IMR-90 (cell line): ENCODE measurements at regions of chr9 and their contacts with region 1.

Region 1: GRCh38 chr9:19408693-19409400 is at the start of gene ACER2:
- DNase-seq: peak; percentile 84
- ATAC-seq: peak; percentile 98
- H3K4me3 ChIP-seq: peak within 1 kb of the TSS; percentile 84
- H3K27ac ChIP-seq: peak within 1 kb of the TSS; percentile 44; the same call in 1 of the 2 replicates
- H3K4me1 ChIP-seq: no peaks in the 10 kb centered on the region
- H3K27me3 ChIP-seq: no peaks in the 10 kb centered on the region
- CTCF ChIP-seq: peak; percentile 19
- POLR2A ChIP-seq: peak; percentile 75
- RAD21 ChIP-seq: no peak
- total RNA-seq, gene ACER2: 1.6 and 1.9 TPM in 2 replicates

Region 2: DNA sequence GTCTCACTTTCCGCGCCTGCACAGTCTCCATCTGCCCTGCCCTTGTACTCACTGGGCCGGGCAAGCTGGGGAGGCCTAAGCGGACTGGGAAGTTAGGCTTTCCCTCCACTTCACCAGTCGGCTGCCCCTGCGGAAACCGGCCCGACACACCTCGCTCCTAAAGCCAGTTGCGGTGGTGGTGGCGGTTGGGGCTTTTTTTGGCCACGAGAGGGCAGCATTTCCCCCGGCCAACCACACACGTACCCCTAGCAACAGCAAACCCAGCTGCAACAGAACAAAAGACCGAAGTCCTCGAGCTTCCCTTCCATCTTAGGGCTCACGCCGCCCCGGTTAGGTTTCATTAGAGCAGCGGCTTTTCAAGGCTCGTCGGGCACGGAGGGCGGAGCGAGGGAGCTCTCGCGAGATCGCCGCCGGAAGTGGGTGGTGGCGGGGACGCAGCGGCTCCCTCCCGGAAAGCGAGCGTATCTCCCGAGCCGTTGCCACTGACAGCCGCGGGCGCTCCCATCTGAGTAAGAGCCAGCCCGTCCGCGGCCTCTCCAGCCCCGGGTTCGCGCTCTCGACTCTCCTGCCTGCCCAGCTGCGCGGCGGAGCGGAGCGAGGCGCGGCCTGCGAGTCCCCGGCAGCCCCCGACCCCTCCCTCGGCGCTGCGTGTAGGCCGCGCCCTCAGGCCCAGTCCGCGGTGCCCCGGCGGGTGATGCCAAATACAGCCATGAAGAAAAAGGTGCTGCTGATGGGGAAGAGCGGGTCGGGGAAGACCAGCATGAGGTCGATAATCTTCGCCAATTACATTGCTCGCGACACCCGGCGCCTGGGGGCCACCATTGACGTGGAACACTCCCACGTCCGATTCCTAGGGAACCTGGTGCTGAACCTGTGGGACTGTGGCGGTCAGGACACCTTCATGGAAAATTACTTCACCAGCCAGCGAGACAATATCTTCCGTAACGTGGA is 359.6 kb before region 1 on chr9 and contains the start of gene RRAGA:
- CTCF ChIA-PET with region 1: no interaction called
- POLR2A ChIA-PET with region 1: no interaction called
- dilution Hi-C with region 1: no loop called
- in situ Hi-C with region 1: no loop called
- intact Hi-C with region 1: loop called (anchors 1 kb)
- DNase-seq: peak; percentile 96
- ATAC-seq: peak; percentile 93
- H3K4me3 ChIP-seq: peak within 1 kb of the TSS; percentile 74
- H3K27ac ChIP-seq: peak within 1 kb of the TSS; percentile 96
- H3K4me1 ChIP-seq: peaks cover 2% of the 10 kb centered on the region; the same call in 1 of the 2 replicates
- H3K27me3 ChIP-seq: no peaks in the 10 kb centered on the region
- CTCF ChIP-seq: peak; percentile 89
- POLR2A ChIP-seq: peak; percentile 97
- RAD21 ChIP-seq: peak; percentile 62
- total RNA-seq, gene RRAGA: 63.3 and 74.7 TPM in 2 replicates

Region 3: DNA sequence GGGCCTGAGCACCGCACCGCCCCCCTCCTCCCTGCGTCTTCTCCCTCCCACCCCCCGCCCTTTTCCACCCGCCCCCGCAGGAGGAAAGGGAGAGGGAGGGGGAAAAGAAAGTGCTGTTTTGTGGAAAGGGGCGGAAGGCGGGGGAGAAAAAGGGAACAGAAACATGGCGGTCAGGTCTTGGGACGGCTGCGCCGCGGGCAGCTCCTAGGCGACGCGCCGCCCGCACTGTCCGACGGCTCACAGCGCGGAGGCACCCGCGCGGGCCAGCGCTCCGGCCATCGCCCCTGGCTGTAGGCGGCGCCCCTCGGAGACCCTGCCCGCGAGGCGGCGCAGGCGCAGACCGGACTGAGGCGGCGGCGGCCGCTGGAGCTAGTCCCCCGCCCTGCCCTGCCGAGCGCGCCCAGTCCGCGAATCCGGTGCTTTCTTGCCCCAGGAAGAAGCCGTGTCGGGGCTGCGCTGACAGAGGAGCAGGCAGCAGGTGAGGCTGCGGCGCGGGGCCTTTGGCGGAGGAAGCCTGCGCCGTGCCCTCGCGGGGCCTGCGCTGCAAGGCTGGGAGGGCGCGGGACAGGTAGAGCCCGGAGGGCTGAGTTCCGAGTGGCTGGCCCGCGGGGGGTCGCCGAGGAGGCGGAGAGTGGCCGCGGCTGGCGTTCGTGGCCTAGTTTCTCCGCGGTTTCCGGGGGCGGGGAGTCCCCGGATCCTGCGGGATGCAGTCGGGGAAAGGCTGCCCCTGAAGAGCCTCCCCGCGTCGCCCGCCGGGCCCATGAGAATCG is 178.3 kb before region 1 on chr9 and contains the start of gene DENND4C:
- CTCF ChIA-PET with region 1: interaction called, 5 read pairs
- POLR2A ChIA-PET with region 1: no interaction called
- dilution Hi-C with region 1: no loop called
- in situ Hi-C with region 1: no loop called
- intact Hi-C with region 1: loop called (anchors 1 kb)
- DNase-seq: peak; percentile 78
- ATAC-seq: peak; percentile 92
- H3K4me3 ChIP-seq: peak within 1 kb of the TSS; percentile 97
- H3K27ac ChIP-seq: peak within 1 kb of the TSS; percentile 97
- H3K4me1 ChIP-seq: peaks cover 3% of the 10 kb centered on the region
- H3K27me3 ChIP-seq: no peaks in the 10 kb centered on the region
- CTCF ChIP-seq: peak; percentile 22; the same call in 1 of the 2 replicates
- POLR2A ChIP-seq: peak; percentile 81
- RAD21 ChIP-seq: no peak
- total RNA-seq, gene DENND4C: 32.6 and 48.0 TPM in 2 replicates

Region 4: GRCh38 chr9:19699756-19700155 is 290.9 kb after region 1 on chr9:
- CTCF ChIA-PET with region 1: no interaction called
- POLR2A ChIA-PET with region 1: no interaction called
- dilution Hi-C with region 1: no loop called
- in situ Hi-C with region 1: no loop called
- intact Hi-C with region 1: no loop called
- DNase-seq: no peak
- ATAC-seq: no peak
- H3K4me3 ChIP-seq: no peak overlapping the region
- H3K27ac ChIP-seq: no peak overlapping the region
- H3K4me1 ChIP-seq: no peaks in the 10 kb centered on the region
- H3K27me3 ChIP-seq: no peaks in the 10 kb centered on the region
- CTCF ChIP-seq: no peak
- POLR2A ChIP-seq: no peak
- RAD21 ChIP-seq: no peak